Naive thymus-derived CD4-positive, alpha-beta T cell (primary cell): ENCODE measurements at regions of chr15 and their contacts with region 1.

Region 1: GRCh38 chr15:90001683-90002427 is 731 bp downstream of the ZNF710 start:
- DNase-seq: peak; percentile 41 to 78 (median 65)
- ATAC-seq: peak; percentile 68
- H3K4me3 ChIP-seq: no peak overlapping the region
- H3K4me3 Mint-ChIP-seq: peak overlapping the region; percentile 85 to 98 (median 90)
- H3K27ac ChIP-seq: peak overlapping the region; percentile 61
- H3K27ac Mint-ChIP-seq: peak overlapping the region; percentile 85 to 97 (median 91)
- H3K4me1 ChIP-seq: peaks cover 6 to 8% of the 10 kb centered on the region in 2 donors
- H3K4me1 Mint-ChIP-seq: peaks cover 37 to 57% (median 48%) of the 10 kb centered on the region in 7 donors
- H3K27me3 ChIP-seq: no peaks in the 10 kb centered on the region
- H3K27me3 Mint-ChIP-seq: peaks cover 0 to 6% (median 0%) of the 10 kb centered on the region in 5 donors

Region 2: DNA sequence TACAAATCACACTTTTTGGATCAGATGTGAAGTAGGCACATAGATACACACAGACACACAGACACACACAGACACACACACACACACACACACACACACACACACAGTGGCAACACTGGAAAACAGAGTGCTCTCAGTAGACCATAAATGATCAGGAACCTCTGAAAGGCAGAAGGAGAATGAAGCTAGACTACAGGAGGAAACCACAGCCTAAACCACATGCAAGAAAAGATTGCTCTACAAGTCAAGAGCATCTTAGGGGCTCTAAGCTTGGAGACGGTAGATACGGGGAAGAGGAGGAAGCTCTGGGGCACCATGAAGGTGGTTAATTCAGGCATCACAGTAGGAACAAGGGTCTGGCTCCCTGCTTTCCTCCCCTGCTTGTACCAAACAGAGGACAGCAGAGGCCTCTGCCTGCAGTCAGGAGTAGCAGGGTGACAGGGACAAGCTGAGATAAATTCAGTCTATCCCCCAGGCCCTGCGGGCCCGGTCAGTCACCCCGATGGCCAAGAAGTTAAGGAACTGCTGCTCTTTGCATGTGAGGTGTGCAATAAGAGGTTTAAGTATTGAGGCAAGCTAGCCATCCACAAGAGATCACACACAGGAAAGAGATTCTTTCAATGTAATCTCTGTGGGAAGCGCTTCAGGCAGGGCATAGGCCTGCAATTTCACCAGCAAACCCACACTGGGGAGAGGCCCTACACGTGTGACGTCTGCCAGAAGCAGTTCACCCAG is 65.6 kb before region 1 on chr15:
- CTCF ChIA-PET with region 1: no interaction called
- POLR2A ChIA-PET with region 1: no interaction called
- intact Hi-C with region 1: loop called in 1 of 2 experiments (anchors 5 kb)
- DNase-seq: peak in 8 of 9 donors; percentile 22 to 60 (median 47)
- ATAC-seq: peak; percentile 80
- H3K4me3 ChIP-seq: no peak overlapping the region
- H3K4me3 Mint-ChIP-seq: peak overlapping the region in 9 of 10 donors; percentile 2 to 51 (median 28)
- H3K27ac ChIP-seq: no peak overlapping the region
- H3K27ac Mint-ChIP-seq: peak overlapping the region in 5 of 9 donors; percentile 0 to 29 (median 13)
- H3K4me1 ChIP-seq: peaks cover 6 to 11% of the 10 kb centered on the region in 2 donors
- H3K4me1 Mint-ChIP-seq: peaks cover 14 to 29% (median 17%) of the 10 kb centered on the region in 7 donors
- H3K27me3 ChIP-seq: no peaks in the 10 kb centered on the region
- H3K27me3 Mint-ChIP-seq: peaks cover 0 to 31% (median 0%) of the 10 kb centered on the region in 5 donors

Region 3: GRCh38 chr15:90013503-90013937 is 11.7 kb after region 1 on chr15:
- CTCF ChIA-PET with region 1: interaction called, 3 read pairs
- POLR2A ChIA-PET with region 1: interaction called, 7 read pairs
- intact Hi-C with region 1: loop called in 1 of 2 experiments (anchors 1 kb)
- DNase-seq: peak in 7 of 9 donors; percentile 40 to 83 (median 77)
- ATAC-seq: peak; percentile 94
- H3K4me3 ChIP-seq: peak overlapping the region; percentile 17
- H3K4me3 Mint-ChIP-seq: peak overlapping the region; percentile 7 to 81 (median 69)
- H3K27ac ChIP-seq: peak overlapping the region; percentile 3
- H3K27ac Mint-ChIP-seq: peak overlapping the region in 8 of 9 donors; percentile 9 to 81 (median 35)
- H3K4me1 ChIP-seq: peaks cover 16 to 27% of the 10 kb centered on the region in 2 donors
- H3K4me1 Mint-ChIP-seq: peaks cover 47 to 69% (median 54%) of the 10 kb centered on the region in 7 donors
- H3K27me3 ChIP-seq: no peaks in the 10 kb centered on the region
- H3K27me3 Mint-ChIP-seq: no peaks in the 10 kb centered on the region

Region 4: DNA sequence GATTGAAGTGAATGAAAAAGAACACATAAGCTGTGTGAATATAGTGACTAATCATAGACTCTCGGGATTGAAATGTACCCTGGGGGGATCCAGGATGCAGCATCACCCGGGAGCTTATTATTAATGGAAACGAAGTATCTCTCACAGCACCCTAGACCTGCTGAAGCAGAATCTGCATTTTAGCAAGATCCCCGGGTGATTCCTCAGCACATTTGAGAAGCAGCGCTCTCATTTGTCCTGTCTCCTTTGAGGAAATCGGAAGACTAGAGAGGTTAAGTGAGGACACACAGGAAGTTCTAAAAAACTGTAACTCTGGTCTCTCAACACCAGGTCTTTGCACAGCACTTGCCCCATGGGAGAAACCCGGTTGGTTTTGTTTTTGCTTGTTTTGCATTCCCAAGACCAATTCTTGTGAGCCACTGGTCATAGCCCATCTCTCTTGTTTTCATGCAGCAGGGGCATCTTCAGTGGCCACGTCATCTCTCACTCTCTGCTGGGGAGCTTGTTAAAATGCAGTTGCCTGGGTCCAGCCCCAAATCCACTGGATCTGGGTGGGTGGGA is 29.5 kb after region 1 on chr15:
- CTCF ChIA-PET with region 1: no interaction called
- POLR2A ChIA-PET with region 1: interaction called, 6 read pairs
- intact Hi-C with region 1: loop called (anchors 1 to 5 kb)
- DNase-seq: peak in 5 of 9 donors; percentile 11 to 40 (median 16)
- ATAC-seq: peak; percentile 31
- H3K4me3 ChIP-seq: no peak overlapping the region
- H3K4me3 Mint-ChIP-seq: peak overlapping the region; percentile 42 to 71 (median 58)
- H3K27ac ChIP-seq: no peak overlapping the region
- H3K27ac Mint-ChIP-seq: peak overlapping the region; percentile 23 to 81 (median 60)
- H3K4me1 ChIP-seq: peaks cover 29 to 37% of the 10 kb centered on the region in 2 donors
- H3K4me1 Mint-ChIP-seq: peaks cover 32 to 61% (median 52%) of the 10 kb centered on the region in 7 donors
- H3K27me3 ChIP-seq: no peaks in the 10 kb centered on the region
- H3K27me3 Mint-ChIP-seq: no peaks in the 10 kb centered on the region

Region 5: DNA sequence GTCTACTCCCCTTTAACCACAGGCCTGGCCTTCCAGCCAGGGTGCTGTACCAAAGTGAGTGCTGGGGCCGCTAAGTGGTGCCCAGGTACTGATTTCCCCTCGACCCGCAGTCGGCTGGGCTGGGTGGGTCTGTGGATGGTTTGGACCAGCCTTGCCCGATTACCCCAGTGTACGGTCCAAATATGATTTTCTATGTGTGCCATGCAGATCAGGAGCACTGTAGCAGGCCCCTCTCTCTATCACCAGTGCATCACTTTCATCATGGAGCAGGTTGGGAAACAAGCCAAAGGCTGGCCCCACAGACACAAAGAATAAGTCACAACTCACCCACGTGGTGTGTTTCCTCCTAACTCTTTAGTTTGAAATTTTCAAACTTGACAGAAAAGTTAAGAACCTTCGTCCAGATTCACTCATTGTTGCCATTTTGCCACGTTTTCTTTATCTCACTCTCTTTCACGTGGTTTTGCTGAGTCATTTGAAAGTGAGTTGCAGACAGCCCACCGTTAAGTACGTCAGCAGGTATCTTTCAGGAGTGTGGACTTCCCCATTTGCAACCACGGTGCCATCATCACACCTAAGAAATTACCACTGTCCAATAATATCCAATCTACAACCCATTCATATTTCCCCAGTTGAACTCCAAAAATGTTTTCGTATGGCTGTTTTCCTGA is 36.2 kb after region 1 on chr15:
- CTCF ChIA-PET with region 1: no interaction called
- POLR2A ChIA-PET with region 1: interaction called, 6 read pairs
- intact Hi-C with region 1: loop called (anchors 1 to 5 kb)
- DNase-seq: peak in 2 of 9 donors; percentile 34 to 47
- ATAC-seq: peak; percentile 57
- H3K4me3 ChIP-seq: no peak overlapping the region
- H3K4me3 Mint-ChIP-seq: peak overlapping the region in 3 of 10 donors; percentile 29 to 45 (median 29)
- H3K27ac ChIP-seq: no peak overlapping the region
- H3K27ac Mint-ChIP-seq: peak overlapping the region in 6 of 9 donors; percentile 11 to 81 (median 43)
- H3K4me1 ChIP-seq: peaks cover 28 to 29% of the 10 kb centered on the region in 2 donors
- H3K4me1 Mint-ChIP-seq: peaks cover 40 to 80% (median 56%) of the 10 kb centered on the region in 7 donors
- H3K27me3 ChIP-seq: no peaks in the 10 kb centered on the region
- H3K27me3 Mint-ChIP-seq: no peaks in the 10 kb centered on the region

Region 6: GRCh38 chr15:90059208-90059985 is 57.5 kb after region 1 on chr15:
- CTCF ChIA-PET with region 1: no interaction called
- POLR2A ChIA-PET with region 1: interaction called, 4 read pairs
- intact Hi-C with region 1: loop called (anchors 2 to 5 kb)
- DNase-seq: peak; percentile 58 to 80 (median 64)
- ATAC-seq: peak; percentile 90
- H3K4me3 ChIP-seq: no peak overlapping the region
- H3K4me3 Mint-ChIP-seq: peak overlapping the region; percentile 29 to 69 (median 52)
- H3K27ac ChIP-seq: peak overlapping the region; percentile 68
- H3K27ac Mint-ChIP-seq: peak overlapping the region; percentile 84 to 94 (median 90)
- H3K4me1 ChIP-seq: peaks cover 15 to 33% of the 10 kb centered on the region in 2 donors
- H3K4me1 Mint-ChIP-seq: peaks cover 38 to 67% (median 55%) of the 10 kb centered on the region in 7 donors
- H3K27me3 ChIP-seq: no peaks in the 10 kb centered on the region
- H3K27me3 Mint-ChIP-seq: no peaks in the 10 kb centered on the region